Cardiac septum (tissue), 1 donor: ENCODE measurements at regions of chr2 and their contacts with region 1.

Region 1: DNA sequence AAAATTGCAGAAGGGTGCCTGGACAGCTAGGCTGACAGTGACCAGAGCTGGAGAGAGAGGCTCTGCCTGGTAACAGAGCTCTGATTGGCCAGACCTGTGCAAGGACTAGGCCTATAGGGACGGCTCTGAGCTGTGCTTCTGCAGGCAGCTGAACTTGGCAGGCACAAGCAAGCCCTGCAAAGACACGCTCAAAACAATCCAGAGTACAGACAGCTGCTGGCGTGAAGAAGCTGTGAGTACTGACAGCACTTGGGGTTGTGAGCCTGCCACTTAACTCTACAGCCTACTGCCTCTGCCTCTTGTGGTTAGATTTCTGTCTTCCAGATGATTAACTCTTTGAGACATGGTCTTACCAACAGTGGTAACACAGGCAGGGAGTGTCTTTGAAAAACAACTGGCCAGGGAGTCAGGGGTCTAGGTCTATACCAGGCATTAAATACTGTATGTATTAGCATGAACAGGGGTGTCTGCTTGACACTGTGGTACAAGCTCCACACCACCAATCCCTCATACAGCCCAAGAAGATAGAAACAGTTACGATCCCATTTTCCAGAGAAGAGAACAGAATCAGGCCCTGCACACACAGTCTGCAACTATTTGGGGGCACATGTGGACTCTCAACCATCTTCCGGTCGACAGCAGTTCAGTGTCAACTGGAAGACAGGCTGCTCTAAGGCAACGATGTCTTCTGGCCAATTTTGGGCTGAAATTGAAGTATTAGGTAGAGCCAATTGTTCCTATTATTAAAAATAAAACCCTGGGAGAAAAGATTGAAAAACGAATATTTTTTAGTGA is 568.4 kb downstream of the TNS1 start:
- DNase-seq: peak; percentile 93

Region 2: GRCh38 chr2:215609089-215610032 is 1825.0 kb before region 1 on chr2:
- intact Hi-C with region 1: no loop called
- DNase-seq: no peak

Region 3: DNA sequence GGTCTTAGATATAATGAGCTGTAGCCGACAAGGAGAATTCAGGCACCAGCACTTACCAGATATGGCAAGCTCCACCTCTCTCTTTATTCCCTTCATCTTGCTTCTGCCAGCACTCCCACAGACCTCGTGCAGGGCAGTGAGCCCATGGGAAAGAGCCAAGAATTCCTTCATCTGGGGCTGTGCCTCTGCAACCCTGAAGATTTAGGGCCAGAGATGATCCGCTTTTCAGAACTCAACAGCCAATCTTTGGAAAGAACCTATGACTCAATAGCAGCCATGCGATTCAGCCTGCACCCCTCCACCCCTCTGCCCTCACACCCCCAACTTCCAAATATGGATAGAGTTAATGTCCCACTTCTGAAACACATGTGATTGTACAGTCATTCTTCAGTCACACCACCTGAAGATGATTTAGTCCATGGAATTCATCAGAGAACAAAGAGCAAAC is 40.8 kb before region 1 on chr2:
- intact Hi-C with region 1: loop called (anchors 2 kb)
- DNase-seq: peak; percentile 79